ENCODE measurements at regions of chr15 and their contacts with region 1.

Region 1: GRCh38 chr15:45393851-45394250 is 15.5 kb upstream of the GATM start:
- DNase-seq: peak; percentile 48 to 56
- H3K4me3 ChIP-seq: no peak overlapping the region
- H3K4me3 Mint-ChIP-seq: no peak overlapping the region
- H3K27ac Mint-ChIP-seq: peak overlapping the region; percentile 46
- H3K4me1 ChIP-seq: peaks cover 26% of the 10 kb centered on the region
- H3K4me1 Mint-ChIP-seq: peaks cover 7% of the 10 kb centered on the region
- H3K27me3 ChIP-seq: no peaks in the 10 kb centered on the region
- H3K27me3 Mint-ChIP-seq: no peaks in the 10 kb centered on the region
- CTCF ChIP-seq: peak; percentile 35 to 40

Region 2: GRCh38 chr15:45307230-45307924 is 86.5 kb before region 1 on chr15:
- CTCF ChIA-PET with region 1: no interaction called
- POLR2A ChIA-PET with region 1: no interaction called
- intact Hi-C with region 1: loop called (anchors 1 kb)
- DNase-seq: peak in 1 of 2 experiments; percentile 29
- H3K4me3 ChIP-seq: no peak overlapping the region
- H3K4me3 Mint-ChIP-seq: peak overlapping the region; percentile 9
- H3K27ac Mint-ChIP-seq: peak overlapping the region; percentile 23
- H3K4me1 ChIP-seq: peaks cover 51% of the 10 kb centered on the region
- H3K4me1 Mint-ChIP-seq: peaks cover 40% of the 10 kb centered on the region
- H3K27me3 ChIP-seq: no peaks in the 10 kb centered on the region
- H3K27me3 Mint-ChIP-seq: no peaks in the 10 kb centered on the region
- CTCF ChIP-seq: peak; percentile 50 to 62

Measured in Caco-2 (cell line).